ENCODE measurements at regions of chr10 and their contacts with region 1.

Region 1: GRCh38 chr10:60114765-60115586 is 208.6 kb upstream of the CCDC6 start:
- DNase-seq: no peak
- ATAC-seq: peak; percentile 82

Region 2: DNA sequence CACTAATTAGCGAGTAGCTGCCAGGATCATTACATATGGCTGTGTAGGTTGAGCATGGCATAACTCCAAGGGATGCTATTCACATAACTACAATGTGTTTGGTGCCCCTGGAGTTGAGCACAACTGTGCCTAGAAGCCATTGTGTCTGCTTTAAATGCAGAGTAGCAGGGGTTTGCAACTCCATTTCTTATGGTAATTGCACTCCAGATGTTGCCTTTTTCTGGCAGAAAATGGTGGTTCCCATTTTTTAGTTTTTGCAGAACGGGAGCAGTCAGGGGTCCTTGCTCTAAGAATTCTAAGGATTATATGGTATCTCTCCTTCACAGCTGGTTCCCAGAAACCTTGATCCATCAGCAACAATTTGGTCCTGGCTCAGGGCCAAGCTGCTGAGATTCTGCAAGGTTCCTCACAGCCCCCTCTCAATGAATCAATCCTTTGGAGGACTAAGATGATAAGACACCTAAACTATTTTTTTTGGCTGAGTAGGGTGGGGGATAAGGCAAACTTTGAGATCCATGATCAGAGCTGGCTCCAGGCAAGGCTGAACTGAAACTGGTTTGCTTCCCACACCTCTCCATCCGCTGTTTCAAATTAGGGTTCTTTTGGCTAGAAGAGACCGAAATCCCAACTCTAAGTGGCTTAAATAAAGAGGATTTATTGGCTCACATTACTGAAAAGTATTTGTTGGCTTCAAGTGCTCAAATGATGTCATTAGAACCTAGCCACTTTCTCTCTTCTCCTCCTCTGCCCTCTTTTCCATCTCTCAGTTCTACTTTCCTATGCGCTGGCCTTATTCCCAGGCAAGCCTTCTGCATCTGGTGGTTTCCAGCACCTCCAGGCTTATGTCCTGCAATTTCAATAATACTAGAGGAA is 111.1 kb before region 1 on chr10:
- intact Hi-C with region 1: no loop called
- DNase-seq: no peak
- ATAC-seq: no peak

Region 3: GRCh38 chr10:60069311-60069710 is 45.7 kb before region 1 on chr10:
- intact Hi-C with region 1: no loop called
- DNase-seq: no peak
- ATAC-seq: no peak

Region 4: GRCh38 chr10:60652628-60653027 is 537.7 kb after region 1 on chr10:
- intact Hi-C with region 1: loop called in 1 of 2 experiments (anchors 10 kb)
- DNase-seq: no peak
- ATAC-seq: no peak

Region 5: GRCh38 chr10:61364619-61365018 is 1249.6 kb after region 1 on chr10:
- intact Hi-C with region 1: no loop called
- DNase-seq: no peak
- ATAC-seq: no peak

Measured in left colon (tissue), 2 donors.